Activated naive CD4-positive, alpha-beta T cell treated with anti-CD3 and anti-CD28 coated beads for 36 hours (primary cell): ENCODE measurements at regions of chr18 and their contacts with region 1.

Region 1: GRCh38 chr18:74896390-74896991 is 298.8 kb downstream of the ZNF407 start:
- DNase-seq: peak; percentile 67
- H3K4me3 Mint-ChIP-seq: no peak overlapping the region
- H3K27ac Mint-ChIP-seq: no peak overlapping the region
- H3K4me1 Mint-ChIP-seq: peaks cover 2% of the 10 kb centered on the region
- H3K27me3 Mint-ChIP-seq: no peaks in the 10 kb centered on the region

Region 2: GRCh38 chr18:74929110-74929509 is 32.6 kb after region 1 on chr18:
- CTCF ChIA-PET with region 1: no interaction called
- intact Hi-C with region 1: no loop called
- DNase-seq: no peak
- H3K4me3 Mint-ChIP-seq: no peak overlapping the region
- H3K27ac Mint-ChIP-seq: no peak overlapping the region
- H3K4me1 Mint-ChIP-seq: no peaks in the 10 kb centered on the region
- H3K27me3 Mint-ChIP-seq: no peaks in the 10 kb centered on the region

Region 3: GRCh38 chr18:74994502-74995419 is 98.3 kb after region 1 on chr18:
- CTCF ChIA-PET with region 1: interaction called, 3 read pairs
- intact Hi-C with region 1: loop called (anchors 1 kb)
- DNase-seq: peak; percentile 34
- H3K4me3 Mint-ChIP-seq: peak overlapping the region; percentile 30
- H3K27ac Mint-ChIP-seq: peak overlapping the region; percentile 50
- H3K4me1 Mint-ChIP-seq: peaks cover 41% of the 10 kb centered on the region
- H3K27me3 Mint-ChIP-seq: no peaks in the 10 kb centered on the region

Region 4: DNA sequence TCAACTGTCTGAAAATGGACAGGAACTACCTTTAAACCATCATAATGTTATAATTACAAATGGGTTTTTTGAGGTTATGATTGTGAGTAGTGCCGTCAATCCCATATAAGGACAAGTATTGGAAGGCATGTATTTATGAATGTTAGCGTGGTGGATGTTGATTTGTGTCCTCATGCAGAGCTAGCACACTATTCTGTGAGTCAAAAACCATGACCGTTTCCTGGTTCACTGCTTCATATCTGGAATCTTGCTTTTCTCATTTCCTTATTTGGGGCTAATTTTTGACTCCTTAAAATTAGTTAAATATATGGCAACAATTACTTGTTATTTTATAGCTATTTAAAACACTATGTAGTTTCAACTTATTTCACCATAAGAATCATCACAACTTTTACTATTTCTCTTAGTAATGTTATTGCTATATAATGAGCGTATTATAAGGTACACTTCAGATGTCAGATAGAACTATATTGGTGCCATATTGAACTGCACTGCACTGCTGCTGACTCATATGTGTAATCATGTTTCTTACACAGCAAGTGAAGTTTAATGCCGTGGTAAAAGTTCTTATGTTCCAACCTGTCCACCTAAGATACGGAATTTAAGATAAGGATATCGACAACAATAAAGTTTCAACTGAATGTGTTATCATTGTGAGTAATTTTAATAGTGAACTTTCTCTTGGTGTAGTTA is 119.7 kb after region 1 on chr18:
- CTCF ChIA-PET with region 1: no interaction called
- intact Hi-C with region 1: no loop called
- DNase-seq: no peak
- H3K4me3 Mint-ChIP-seq: no peak overlapping the region
- H3K27ac Mint-ChIP-seq: no peak overlapping the region
- H3K4me1 Mint-ChIP-seq: peaks cover 5% of the 10 kb centered on the region
- H3K27me3 Mint-ChIP-seq: no peaks in the 10 kb centered on the region

Region 5: GRCh38 chr18:75247611-75248421 is 351.3 kb after region 1 on chr18:
- CTCF ChIA-PET with region 1: no interaction called
- intact Hi-C with region 1: loop called (anchors 1 kb)
- DNase-seq: peak; percentile 36
- H3K4me3 Mint-ChIP-seq: peak overlapping the region; percentile 77
- H3K27ac Mint-ChIP-seq: peak overlapping the region; percentile 93
- H3K4me1 Mint-ChIP-seq: peaks cover 60% of the 10 kb centered on the region
- H3K27me3 Mint-ChIP-seq: no peaks in the 10 kb centered on the region

Region 6: DNA sequence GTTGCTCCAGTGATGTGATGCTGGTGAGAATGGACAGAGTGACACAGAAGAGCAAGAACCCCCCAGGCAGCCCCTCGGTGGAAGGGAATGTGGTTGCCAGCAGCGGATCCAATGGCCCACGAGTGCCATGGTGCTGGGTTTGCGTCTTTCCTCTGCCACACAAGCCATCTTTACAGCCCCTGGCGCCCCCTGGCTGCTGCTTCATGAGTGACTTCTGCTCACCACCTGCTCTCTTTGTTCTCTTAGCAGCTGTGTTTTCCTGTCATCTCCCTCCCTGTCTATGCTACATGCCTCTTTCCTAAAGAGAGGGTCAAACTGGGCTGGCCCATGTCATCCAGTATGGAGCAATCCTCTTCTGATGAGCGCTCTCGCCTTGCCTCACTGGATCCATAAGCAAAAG is 831.0 kb after region 1 on chr18:
- CTCF ChIA-PET with region 1: no interaction called
- intact Hi-C with region 1: loop called (anchors 5 kb)
- DNase-seq: peak; percentile 66
- H3K4me3 Mint-ChIP-seq: no peak overlapping the region
- H3K27ac Mint-ChIP-seq: no peak overlapping the region
- H3K4me1 Mint-ChIP-seq: no peaks in the 10 kb centered on the region
- H3K27me3 Mint-ChIP-seq: peaks cover 34% of the 10 kb centered on the region